Activated CD4-positive, alpha-beta memory T cell treated with anti-CD3 and anti-CD28 coated beads for 36 hours (primary cell): ENCODE measurements at regions of chr9 and their contacts with region 1.

Region 1: GRCh38 chr9:15135164-15135792 is 171.7 kb downstream of the TTC39B start:
- DNase-seq: peak; percentile 45
- H3K4me3 Mint-ChIP-seq: no peak overlapping the region
- H3K27ac Mint-ChIP-seq: no peak overlapping the region
- H3K4me1 Mint-ChIP-seq: peaks cover 3% of the 10 kb centered on the region
- H3K27me3 Mint-ChIP-seq: peaks cover 2% of the 10 kb centered on the region

Region 2: DNA sequence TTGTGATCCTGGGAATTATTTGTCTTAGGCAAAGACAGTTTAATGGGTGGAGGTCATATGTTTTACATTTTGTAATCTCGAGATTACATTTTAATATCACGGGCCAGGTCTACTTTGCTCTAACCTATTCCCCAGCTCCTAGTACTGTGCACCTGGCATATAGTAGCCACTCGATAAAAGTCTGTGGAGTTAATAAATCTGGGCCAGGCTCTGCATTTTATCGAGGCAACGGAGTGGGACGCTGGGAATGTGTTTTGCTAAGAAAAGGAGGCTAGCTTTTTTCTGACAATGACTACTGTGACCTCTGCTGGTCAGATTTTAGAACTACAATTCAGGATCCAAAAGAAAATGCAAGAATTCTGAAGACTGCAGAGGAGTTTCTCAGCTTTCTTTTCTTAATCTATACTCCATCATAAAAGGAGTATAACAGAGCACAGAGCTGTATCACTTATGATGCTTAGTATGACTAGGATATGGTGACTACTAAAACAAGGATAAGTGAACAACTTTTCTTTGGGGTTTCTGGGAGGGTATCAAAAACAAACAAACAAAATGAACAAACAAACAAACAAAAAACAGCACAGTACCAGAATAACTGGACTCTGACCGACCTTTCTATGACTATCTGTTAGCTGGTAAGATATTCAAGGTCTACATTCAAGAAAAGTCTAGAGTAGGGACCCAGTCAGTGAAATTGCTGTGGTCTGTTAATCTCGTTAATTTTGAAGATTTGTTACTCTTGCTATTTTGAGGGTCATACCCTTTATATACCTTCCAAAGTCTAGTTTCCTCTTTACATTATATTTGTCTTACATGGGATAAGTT is 366.7 kb before region 1 on chr9:
- CTCF ChIA-PET with region 1: interaction called, 11 read pairs
- POLR2A ChIA-PET with region 1: no interaction called
- intact Hi-C with region 1: loop called (anchors 1 kb)
- DNase-seq: no peak
- H3K4me3 Mint-ChIP-seq: no peak overlapping the region
- H3K27ac Mint-ChIP-seq: no peak overlapping the region
- H3K4me1 Mint-ChIP-seq: no peaks in the 10 kb centered on the region
- H3K27me3 Mint-ChIP-seq: peaks cover 12% of the 10 kb centered on the region

Region 3: DNA sequence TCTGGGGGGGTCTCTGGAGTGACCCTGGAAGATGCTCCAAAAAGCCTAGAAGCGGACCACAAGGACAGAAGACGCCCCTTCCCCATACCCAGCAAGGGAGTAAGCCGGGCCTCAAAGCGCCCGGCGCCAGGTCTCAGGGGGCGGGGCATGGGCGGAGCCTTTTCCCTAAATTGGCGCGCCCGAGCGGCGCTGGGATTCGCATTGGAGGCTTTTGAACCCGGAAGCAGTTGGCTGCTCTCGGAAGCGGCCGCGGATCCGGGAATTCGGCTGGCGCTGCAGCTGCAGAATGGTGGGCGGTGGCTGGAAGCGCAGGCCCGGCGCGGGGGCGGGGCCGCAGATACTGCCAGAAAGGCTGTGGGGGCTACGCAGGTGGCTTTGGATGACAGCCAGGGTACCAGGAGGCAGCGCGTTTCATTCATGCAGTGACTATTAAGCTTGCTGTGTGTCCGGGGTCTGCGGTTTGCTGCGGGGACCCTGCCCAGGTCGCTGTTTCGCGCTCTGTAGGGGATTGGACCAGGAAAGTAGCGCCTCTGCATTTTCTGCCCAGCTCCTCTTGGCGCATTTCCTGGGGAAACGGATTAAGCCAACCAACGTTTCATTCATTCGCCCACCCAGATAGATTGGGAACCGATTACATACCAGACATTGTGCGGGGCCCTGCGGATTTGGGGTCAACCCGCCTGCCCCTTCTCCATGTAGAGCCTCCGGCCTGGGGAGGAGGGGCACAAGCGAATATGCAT is 142.0 kb before region 1 on chr9:
- CTCF ChIA-PET with region 1: no interaction called
- POLR2A ChIA-PET with region 1: no interaction called
- intact Hi-C with region 1: loop called (anchors 5 kb)
- DNase-seq: peak; percentile 75
- H3K4me3 Mint-ChIP-seq: peak overlapping the region; percentile 62
- H3K27ac Mint-ChIP-seq: peak overlapping the region; percentile 2
- H3K4me1 Mint-ChIP-seq: peaks cover 28% of the 10 kb centered on the region
- H3K27me3 Mint-ChIP-seq: peaks cover 2% of the 10 kb centered on the region

Region 4: DNA sequence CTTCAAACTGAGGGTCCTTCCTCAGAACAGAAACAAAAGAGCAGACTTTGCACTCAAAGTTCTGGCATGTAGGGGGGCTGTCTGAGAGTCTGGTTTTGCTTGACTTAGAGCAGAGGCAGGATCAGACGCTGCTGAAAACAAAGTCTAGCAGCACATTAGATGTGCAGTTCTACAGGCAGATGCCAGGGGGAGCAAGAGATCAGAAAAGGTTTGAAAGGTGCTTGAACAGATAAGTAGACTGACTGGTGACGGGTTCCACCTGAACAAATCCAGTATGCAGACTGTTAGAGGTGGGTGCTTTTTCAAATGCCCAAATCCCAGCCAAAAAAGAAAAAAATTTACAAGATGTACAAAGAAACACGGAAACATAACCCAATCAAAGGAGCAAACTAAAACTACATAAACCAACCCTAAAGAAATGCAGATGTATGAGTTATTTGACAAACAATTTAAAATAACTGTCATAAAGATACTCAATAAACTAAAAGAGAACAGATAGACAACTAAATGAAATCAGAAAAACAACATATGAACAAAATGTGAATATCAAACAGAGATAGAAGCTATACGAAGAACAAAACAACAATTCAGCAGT is 30.4 kb before region 1 on chr9:
- CTCF ChIA-PET with region 1: interaction called, 121 read pairs
- POLR2A ChIA-PET with region 1: no interaction called
- intact Hi-C with region 1: loop called (anchors 1 kb)
- DNase-seq: peak; percentile 34
- H3K4me3 Mint-ChIP-seq: no peak overlapping the region
- H3K27ac Mint-ChIP-seq: no peak overlapping the region
- H3K4me1 Mint-ChIP-seq: no peaks in the 10 kb centered on the region
- H3K27me3 Mint-ChIP-seq: peaks cover 11% of the 10 kb centered on the region

Region 5: GRCh38 chr9:15116130-15116580 is 19.1 kb before region 1 on chr9:
- CTCF ChIA-PET with region 1: interaction called, 10 read pairs
- POLR2A ChIA-PET with region 1: no interaction called
- intact Hi-C with region 1: no loop called
- DNase-seq: no peak
- H3K4me3 Mint-ChIP-seq: no peak overlapping the region
- H3K27ac Mint-ChIP-seq: no peak overlapping the region
- H3K4me1 Mint-ChIP-seq: peaks cover 3% of the 10 kb centered on the region
- H3K27me3 Mint-ChIP-seq: no peaks in the 10 kb centered on the region